Dorsolateral prefrontal cortex (tissue), 120 donors: ENCODE measurements at regions of chr5 and their contacts with region 1.

Region 1: DNA sequence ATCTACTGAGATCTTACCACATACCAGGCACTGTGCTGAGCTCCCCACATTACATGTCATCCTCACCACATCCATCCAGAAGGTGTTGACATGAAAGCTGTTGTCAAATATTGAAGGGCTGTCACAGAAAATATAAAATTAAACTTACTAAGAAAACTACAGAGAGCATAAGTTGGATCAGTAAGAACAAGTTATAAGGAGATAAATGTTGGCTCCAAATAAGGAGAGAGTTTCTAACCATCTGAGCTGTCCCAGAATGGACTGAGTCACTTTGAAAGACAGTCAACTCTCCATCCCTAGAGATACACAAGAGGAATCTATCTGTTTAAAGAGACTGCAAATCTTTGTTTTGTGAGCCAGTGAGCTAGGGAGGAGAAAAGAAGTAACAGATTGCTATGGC is 169.8 kb downstream of the DRD1 start:
- DNase-seq: no peak
- H3K4me3 ChIP-seq: no peak overlapping the region
- H3K27ac ChIP-seq: no peak overlapping the region
- H3K27me3 ChIP-seq: peaks cover 0 to 4% (median 0%) of the 10 kb centered on the region in 45 donors
- CTCF ChIP-seq: no peak

Region 2: GRCh38 chr5:175230299-175230698 is 43.9 kb before region 1 on chr5:
- intact Hi-C with region 1: loop called in 1 of 2 experiments (anchors 1 kb)
- DNase-seq: no peak
- H3K4me3 ChIP-seq: no peak overlapping the region
- H3K27ac ChIP-seq: no peak overlapping the region
- H3K27me3 ChIP-seq: no peaks in the 10 kb centered on the region
- CTCF ChIP-seq: no peak

Region 3: DNA sequence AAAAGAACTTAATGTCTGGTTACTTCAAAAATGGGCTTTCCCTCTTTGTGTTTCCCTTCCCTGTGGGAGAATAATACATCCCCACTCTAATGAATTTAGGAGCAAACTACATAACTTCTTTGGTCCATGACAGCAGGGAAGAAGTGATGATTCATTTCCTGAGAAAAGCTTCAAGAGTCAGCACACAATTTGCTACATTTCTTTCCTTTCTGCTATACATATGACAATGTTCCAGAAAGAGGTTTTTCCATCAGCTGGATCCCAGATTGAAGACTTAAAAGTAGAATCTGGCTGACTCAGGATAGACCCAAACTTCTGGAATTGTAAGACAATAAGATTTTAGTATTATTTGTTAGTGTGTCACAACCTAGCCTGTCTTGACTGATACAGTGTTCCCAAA is 43.7 kb after region 1 on chr5:
- intact Hi-C with region 1: no loop called
- DNase-seq: no peak
- H3K4me3 ChIP-seq: no peak overlapping the region
- H3K27ac ChIP-seq: peak overlapping the region in 21 of 59 donors; percentile 3 to 64 (median 28)
- H3K27me3 ChIP-seq: peaks cover 0 to 2% (median 0%) of the 10 kb centered on the region in 45 donors
- CTCF ChIP-seq: no peak